ENCODE measurements at regions of chr13 and their contacts with region 1.

Region 1: DNA sequence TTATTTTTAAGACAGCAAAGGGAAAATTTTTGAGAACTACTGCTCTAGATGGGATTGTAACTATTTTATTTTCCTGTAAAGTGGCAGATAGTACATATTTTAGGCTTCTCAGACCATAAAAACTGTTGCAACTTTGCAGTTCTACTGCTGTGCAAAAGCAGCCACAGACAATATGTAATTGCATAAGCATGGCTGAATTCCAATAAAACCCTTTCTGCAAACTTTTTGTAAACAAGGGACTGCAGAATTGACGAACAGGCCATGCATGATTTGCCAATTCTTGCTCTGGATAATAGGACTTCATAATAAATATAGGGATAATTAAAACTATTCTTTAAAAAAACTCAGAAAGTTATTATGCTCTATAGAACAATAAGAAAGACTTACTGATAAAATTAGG is 149.1 kb downstream of the SLITRK5 start:
- DNase-seq: peak; percentile 63
- H3K4me3 Mint-ChIP-seq: no peak overlapping the region
- H3K27ac Mint-ChIP-seq: peak overlapping the region; percentile 23
- H3K4me1 Mint-ChIP-seq: peaks cover 19% of the 10 kb centered on the region
- H3K27me3 Mint-ChIP-seq: no peaks in the 10 kb centered on the region
- CTCF ChIP-seq: no peak

Region 2: DNA sequence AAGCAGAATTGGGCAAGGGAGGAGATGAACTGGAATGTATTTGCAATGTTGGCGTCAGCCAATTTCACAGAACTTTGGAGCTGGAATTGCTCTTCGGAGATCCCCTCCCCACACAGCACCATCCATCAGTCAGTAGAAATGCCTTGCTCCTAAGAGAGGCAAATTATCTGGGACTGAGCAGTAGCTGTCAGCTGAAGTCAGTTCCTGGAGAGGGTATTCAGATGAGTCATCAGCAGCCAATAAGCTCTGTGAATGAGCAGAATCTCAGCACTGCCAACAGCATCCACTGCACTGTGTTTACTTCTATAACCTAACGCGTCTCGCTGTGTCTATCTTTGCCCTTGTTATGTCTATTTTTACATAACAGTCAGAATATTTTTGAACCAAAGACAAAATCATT is 64.6 kb after region 1 on chr13:
- CTCF ChIA-PET with region 1: no interaction called
- POLR2A ChIA-PET with region 1: no interaction called
- intact Hi-C with region 1: loop called (anchors 2 kb)
- DNase-seq: peak; percentile 18
- H3K4me3 Mint-ChIP-seq: no peak overlapping the region
- H3K27ac Mint-ChIP-seq: no peak overlapping the region
- H3K4me1 Mint-ChIP-seq: no peaks in the 10 kb centered on the region
- H3K27me3 Mint-ChIP-seq: no peaks in the 10 kb centered on the region
- CTCF ChIP-seq: no peak

Measured in MCF 10A (cell line).